Astrocyte of the cerebellum (primary cell): ENCODE measurements at regions of chr4 and their contacts with region 1.

Region 1: GRCh38 chr4:6308899-6309643 is 39.4 kb downstream of the WFS1 start:
- DNase-seq: no peak
- H3K4me3 ChIP-seq: peak overlapping the region; percentile 39
- CTCF ChIP-seq: peak; percentile 13

Region 2: GRCh38 chr4:4766564-4766963 is 1542.5 kb before region 1 on chr4:
- in situ Hi-C with region 1: no loop called
- DNase-seq: no peak
- H3K4me3 ChIP-seq: no peak overlapping the region
- CTCF ChIP-seq: no peak

Region 3: DNA sequence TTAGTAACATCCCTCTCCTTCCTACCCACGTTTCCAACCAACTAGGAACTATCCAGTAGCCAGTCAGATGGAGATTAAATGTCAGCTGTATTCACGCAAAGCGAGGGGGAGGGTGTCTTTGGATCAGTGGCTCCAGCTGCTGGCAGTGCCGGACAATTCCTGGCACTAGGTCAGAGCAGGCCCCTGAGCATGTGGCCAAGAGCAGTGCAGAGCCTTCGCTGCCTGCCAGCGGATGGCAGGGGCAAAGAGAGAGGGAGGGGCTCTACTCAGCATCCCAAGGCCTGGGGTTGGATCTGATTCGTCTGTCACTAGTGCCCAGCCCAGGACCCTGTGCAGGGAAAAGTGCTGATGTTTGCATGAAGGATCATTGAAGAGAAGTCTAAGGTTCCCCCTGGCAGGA is 80.0 kb before region 1 on chr4:
- in situ Hi-C with region 1: no loop called
- DNase-seq: no peak
- H3K4me3 ChIP-seq: no peak overlapping the region
- CTCF ChIP-seq: no peak

Region 4: DNA sequence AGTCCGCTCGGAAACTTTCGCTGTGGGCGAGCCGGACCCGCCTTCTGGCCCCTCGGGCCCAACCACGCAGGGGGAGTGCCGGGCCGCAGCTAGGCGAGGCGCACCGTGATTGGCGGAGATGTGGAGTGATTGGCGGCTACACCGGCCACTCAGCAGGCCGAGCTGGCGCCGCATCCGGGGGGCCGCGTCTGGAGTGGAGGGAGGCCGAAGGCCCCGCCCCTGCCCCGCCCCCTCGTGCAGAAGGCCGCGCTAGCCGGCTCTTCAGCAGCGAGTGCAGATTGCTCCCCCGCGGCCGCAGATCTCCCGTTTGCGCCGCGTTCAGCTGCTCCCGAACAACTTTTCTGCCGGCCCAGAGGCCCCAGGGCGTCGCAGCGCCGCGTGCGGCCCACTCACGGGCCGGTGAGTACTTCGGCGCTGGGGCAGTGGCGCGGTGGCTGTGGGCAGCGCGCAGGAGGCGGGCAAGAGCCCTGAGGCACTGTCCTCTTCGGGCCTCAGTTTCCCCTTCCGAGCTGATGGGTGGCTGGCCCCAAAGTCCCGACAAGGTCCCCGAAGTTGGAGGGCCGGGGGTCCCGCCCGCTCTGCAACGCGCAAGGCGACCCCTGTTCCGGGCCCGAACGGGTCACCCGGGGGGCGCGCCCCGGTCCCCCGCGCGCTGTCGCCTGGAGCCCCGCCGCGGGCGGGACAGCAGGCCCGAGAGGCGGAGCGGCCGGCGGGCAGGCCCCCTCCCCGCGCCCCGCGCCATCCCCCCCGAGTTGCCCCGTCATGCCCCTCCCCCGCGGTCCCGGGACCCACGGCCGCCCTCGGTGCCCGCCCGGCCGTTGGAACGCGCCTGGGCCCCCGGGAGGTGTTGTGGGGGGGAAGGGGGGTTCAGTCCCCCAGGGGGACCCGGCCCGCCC is 39.2 kb before region 1 on chr4 and contains the start of gene WFS1:
- in situ Hi-C with region 1: loop called (anchors 5 kb)
- DNase-seq: peak; percentile 96
- H3K4me3 ChIP-seq: peak within 1 kb of the TSS; percentile 90
- CTCF ChIP-seq: no peak

Region 5: DNA sequence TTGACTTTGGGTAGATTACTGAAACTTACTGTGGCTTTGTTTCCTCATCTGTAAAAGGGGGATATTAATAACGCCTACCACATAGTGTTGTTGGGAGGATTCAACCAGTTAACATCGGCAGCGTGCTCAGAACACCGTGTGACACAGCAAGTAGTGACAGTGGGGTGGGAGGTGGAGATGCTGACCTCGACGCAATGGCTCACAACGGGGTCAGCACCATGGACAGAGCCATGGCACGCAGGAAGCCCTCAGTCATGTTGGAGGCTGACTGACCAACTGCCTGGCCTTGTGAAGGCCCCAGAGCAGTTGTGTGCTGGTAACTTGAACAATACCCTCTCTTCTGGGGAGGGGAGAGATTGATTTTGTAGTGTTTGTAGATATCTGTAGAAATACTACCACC is 53.8 kb after region 1 on chr4:
- in situ Hi-C with region 1: no loop called
- DNase-seq: no peak
- H3K4me3 ChIP-seq: no peak overlapping the region
- CTCF ChIP-seq: no peak

Region 6: GRCh38 chr4:6379767-6380745 is 71.0 kb after region 1 on chr4:
- in situ Hi-C with region 1: loop called (anchors 5 kb)
- DNase-seq: no peak
- H3K4me3 ChIP-seq: no peak overlapping the region
- CTCF ChIP-seq: no peak